ENCODE measurements at regions of chr1 and their contacts with region 1.

Region 1: GRCh38 chr1:228082135-228082891 is at the start of gene ARF1:
- DNase-seq: peak; percentile 94
- H3K4me3 ChIP-seq: peak within 1 kb of the TSS; percentile 51 to 86 (median 73)
- H3K27ac ChIP-seq: peak within 1 kb of the TSS; percentile 94
- H3K4me1 ChIP-seq: peaks cover 39% of the 10 kb centered on the region
- H3K27me3 ChIP-seq: no peaks in the 10 kb centered on the region
- CTCF ChIP-seq: no peak
- POLR2A ChIP-seq: peak; percentile 92
- total RNA-seq, gene ARF1: 488 and 499 TPM in 2 replicates

Region 2: DNA sequence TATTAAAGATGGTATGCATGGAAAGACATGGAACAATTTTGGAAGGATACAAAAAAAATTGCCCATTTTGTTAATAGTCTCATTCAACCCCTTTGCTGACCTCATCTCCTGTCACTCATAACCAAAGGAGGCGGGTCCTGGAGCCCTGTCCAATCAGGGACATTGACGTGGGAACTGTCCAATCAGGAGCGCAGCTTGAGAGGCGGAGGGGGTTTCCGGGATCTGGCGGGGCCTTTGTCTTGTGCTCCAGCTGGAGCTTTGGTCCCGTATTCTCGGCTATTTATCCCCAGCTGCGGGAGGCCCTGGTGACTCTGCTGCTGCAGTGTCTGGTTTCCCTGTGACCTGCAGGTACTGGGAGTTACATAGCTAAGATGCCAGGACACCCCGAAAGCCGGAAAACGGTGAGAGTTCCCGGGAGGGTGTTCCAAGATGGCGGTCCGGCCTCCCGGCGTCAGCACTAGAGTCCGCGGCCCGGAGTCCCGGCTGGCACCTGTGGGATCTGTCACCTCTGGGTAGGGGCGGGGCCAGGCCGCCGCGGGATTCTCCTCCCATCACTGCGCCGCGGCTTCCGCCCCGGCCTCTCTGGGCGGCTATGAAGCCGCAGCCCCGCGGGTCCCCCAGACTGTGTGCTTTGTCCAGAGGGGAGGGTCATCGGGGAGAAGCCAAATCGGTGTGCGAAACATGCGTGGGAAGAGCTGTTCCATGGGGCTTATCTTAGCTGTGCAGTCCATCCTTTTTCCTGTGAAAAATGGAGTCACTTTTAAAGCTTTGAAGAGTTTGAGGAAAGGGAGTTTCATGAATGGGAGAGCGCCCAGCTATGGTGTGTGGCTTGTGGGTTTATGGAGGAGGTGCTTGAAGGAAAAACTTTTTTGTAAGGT is 518.8 kb before region 1 on chr1 and contains the start of gene ZNF678:
- CTCF ChIA-PET with region 1: no interaction called
- POLR2A ChIA-PET with region 1: no interaction called
- dilution Hi-C with region 1: no loop called
- intact Hi-C with region 1: loop called (anchors 10 kb)
- DNase-seq: peak; percentile 94
- H3K4me3 ChIP-seq: peak within 1 kb of the TSS; percentile 70 to 90 (median 90)
- H3K27ac ChIP-seq: peak within 1 kb of the TSS; percentile 94
- H3K4me1 ChIP-seq: peaks cover 5% of the 10 kb centered on the region
- H3K27me3 ChIP-seq: peaks cover 19 to 27% of the 10 kb centered on the region in 2 experiments
- CTCF ChIP-seq: no peak
- POLR2A ChIP-seq: peak; percentile 55
- total RNA-seq, gene ZNF678: 7.5 and 7.7 TPM in 2 replicates

Region 3: DNA sequence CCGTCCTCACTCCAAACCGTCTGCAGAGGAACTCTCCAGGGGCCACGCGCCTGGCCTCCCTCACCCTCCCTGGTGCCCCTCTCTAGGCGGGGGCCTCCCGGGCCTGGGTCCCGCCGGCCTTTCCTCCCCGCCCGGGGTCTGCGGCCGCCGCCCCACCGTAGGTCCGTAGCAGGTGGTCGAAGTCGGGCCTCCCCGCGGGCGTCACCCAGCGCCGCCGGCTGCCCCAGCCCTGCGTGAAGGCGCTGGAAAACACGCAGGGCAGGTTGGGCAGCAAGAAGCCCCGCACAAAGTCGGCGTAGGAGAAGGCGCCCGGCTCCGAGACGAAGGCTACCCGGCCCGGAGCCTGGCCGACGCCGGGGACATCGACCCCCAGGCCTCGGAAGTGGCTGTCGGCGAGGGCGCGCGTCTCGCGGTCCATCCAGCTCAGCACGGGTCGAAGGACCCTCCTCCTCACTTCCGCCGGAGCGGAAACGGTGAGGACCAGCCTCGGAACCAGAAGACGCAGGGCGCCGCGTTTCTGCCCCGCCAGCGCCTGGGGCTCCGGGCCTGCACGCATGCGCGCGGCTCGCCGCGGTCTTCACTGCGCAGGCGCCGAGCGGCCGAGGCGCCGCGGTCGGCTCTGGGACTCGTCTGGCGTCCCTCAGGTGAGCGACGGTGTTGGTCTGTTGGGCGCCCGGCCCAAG is 347.3 kb before region 1 on chr1 and contains the starts of genes JMJD4 and SNAP47:
- CTCF ChIA-PET with region 1: no interaction called
- POLR2A ChIA-PET with region 1: interaction called, 4 read pairs
- dilution Hi-C with region 1: no loop called
- intact Hi-C with region 1: loop called (anchors 10 kb)
- DNase-seq: peak; percentile 89
- H3K4me3 ChIP-seq: peak within 1 kb of the TSS; percentile 65 to 89 (median 87)
- H3K27ac ChIP-seq: peak within 1 kb of the TSS; percentile 44
- H3K4me1 ChIP-seq: peaks cover 12% of the 10 kb centered on the region
- H3K27me3 ChIP-seq: no peaks in the 10 kb centered on the region
- CTCF ChIP-seq: no peak
- POLR2A ChIP-seq: peak; percentile 80
- total RNA-seq, gene JMJD4: 15.2 and 17.3 TPM in 2 replicates
- total RNA-seq, gene SNAP47: 24.0 and 25.3 TPM in 2 replicates

Region 4: DNA sequence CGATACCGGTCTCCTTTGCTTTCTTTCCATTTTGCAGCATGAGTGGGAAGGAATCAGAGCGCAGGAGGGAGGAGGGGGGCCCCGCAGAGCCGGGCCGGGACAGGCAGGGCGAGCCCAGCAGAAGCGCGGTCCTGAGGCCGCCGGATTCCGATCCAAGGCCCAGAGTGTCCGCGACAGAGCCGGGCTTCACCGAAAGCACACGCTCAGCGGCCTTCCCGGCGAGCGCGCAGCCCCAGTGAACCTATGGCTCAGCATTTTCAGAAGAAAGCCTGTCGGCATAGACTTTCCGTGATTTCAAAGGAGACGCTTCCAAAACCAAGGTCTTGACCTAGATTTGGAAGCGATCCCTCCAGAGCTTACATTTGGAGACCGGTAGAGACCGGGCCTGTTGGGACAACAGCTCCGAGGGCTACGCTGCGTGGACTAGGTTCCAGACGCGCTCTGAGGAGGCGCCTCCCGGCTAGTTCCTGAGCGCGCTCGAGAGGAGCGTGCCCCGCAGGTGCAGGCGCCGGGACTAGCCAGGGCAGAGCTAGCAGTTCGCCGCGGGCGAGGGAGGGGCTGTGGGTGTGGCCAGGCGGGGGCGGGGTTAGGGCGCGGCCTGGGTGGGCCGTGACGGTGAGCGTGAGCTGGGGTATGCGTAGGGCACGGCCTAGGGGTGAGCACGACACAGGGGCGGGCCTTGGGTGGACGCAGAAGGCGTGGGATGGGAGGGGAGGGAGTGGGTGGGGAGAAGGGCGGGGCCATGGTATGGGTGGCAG is 294.6 kb before region 1 on chr1:
- CTCF ChIA-PET with region 1: no interaction called
- POLR2A ChIA-PET with region 1: no interaction called
- dilution Hi-C with region 1: no loop called
- intact Hi-C with region 1: loop called (anchors 10 kb)
- DNase-seq: peak; percentile 92
- H3K4me3 ChIP-seq: peak overlapping the region; percentile 50 to 62 (median 60)
- H3K27ac ChIP-seq: no peak overlapping the region
- H3K4me1 ChIP-seq: peaks cover 9% of the 10 kb centered on the region
- H3K27me3 ChIP-seq: peaks cover 0 to 1% of the 10 kb centered on the region in 2 experiments
- CTCF ChIP-seq: no peak
- POLR2A ChIP-seq: no peak

Region 5: DNA sequence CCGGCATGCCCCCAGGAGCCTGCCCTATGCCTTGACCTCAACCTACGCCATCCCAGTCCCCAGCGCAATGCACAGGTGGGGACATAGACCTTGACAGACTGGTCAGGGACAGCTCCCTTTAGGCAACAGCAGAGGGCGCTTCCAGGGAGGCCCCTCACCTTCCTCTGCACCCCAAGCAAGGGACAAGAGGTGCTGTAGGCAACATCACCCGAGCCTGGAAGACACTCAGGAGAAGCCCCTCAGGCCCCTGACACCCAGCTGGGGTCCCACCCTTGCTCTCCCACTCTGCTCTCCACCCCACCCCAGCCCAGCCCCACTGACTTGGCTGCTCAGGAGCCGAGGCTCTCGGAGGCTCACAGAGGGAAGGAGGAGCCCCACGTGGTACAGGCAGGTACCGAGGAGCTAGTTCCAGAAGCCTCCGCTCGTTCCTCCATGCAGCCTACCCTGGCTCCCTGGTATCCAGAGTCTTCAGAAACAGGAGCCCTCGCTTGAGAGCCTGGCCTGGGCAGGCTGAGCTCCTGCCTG is 77.9 kb before region 1 on chr1:
- CTCF ChIA-PET with region 1: interaction called, 15 read pairs
- POLR2A ChIA-PET with region 1: interaction called, 3 read pairs
- dilution Hi-C with region 1: no loop called
- intact Hi-C with region 1: loop called (anchors 5 kb)
- DNase-seq: no peak
- H3K4me3 ChIP-seq: no peak overlapping the region
- H3K27ac ChIP-seq: no peak overlapping the region
- H3K4me1 ChIP-seq: no peaks in the 10 kb centered on the region
- H3K27me3 ChIP-seq: peaks cover 41 to 46% of the 10 kb centered on the region in 2 experiments
- CTCF ChIP-seq: peak; percentile 8 to 48
- POLR2A ChIP-seq: no peak

Region 6: GRCh38 chr1:228102791-228103620 is 20.7 kb after region 1 on chr1 and contains the start of gene C1orf35:
- CTCF ChIA-PET with region 1: interaction called, 10 read pairs
- POLR2A ChIA-PET with region 1: no interaction called
- dilution Hi-C with region 1: no loop called
- intact Hi-C with region 1: loop called (anchors 1 kb)
- DNase-seq: peak; percentile 95
- H3K4me3 ChIP-seq: peak within 1 kb of the TSS; percentile 53 to 57 (median 53)
- H3K27ac ChIP-seq: peak within 1 kb of the TSS; percentile 5
- H3K4me1 ChIP-seq: peaks cover 10% of the 10 kb centered on the region
- H3K27me3 ChIP-seq: no peaks in the 10 kb centered on the region
- CTCF ChIP-seq: no peak
- POLR2A ChIP-seq: no peak
- total RNA-seq, gene C1orf35: 21.7 and 23.9 TPM in 2 replicates

Region 7: GRCh38 chr1:228139944-228140656 is 57.8 kb after region 1 on chr1 and contains the start of gene GUK1:
- CTCF ChIA-PET with region 1: no interaction called
- POLR2A ChIA-PET with region 1: no interaction called
- dilution Hi-C with region 1: no loop called
- intact Hi-C with region 1: loop called (anchors 1 kb)
- DNase-seq: peak; percentile 100
- H3K4me3 ChIP-seq: peak within 1 kb of the TSS; percentile 53 to 77 (median 65)
- H3K27ac ChIP-seq: peak within 1 kb of the TSS; percentile 82
- H3K4me1 ChIP-seq: peaks cover 18% of the 10 kb centered on the region
- H3K27me3 ChIP-seq: peaks cover 15 to 21% of the 10 kb centered on the region in 2 experiments
- CTCF ChIP-seq: peak in 1 of 2 donors; percentile 43
- POLR2A ChIP-seq: peak; percentile 95
- total RNA-seq, gene GUK1: 237 and 239 TPM in 2 replicates

Measured in endothelial cell of umbilical vein (primary cell).